ENCODE measurements at regions of chr7 and their contacts with region 1.

Region 1: DNA sequence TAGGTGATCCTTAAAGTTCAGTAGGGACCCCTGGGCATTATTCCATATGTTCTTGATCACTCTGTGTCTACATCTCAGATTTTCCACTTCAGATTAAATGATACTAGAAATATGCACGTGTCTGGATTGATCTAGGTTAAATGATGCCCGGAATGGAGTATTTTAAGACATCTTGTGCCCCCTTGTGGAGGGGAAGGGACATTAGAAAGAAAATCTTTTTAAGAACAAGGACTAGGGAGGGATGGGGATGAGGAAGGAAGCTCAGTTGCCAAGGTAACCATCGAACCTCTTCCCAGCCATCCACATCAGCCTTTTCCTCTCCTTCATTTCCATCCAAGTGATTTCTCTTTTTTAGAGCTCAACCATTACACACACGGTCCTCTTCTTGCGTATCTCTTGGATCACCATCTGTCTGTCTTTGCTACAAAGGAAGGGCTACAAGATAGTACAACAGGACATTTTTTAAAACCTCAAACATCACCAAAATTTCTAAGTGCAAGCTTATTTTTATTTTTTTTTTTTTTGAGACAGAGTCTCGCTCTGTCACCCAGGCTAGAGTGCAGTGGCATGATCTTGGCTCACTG is 40.5 kb downstream of the PRSS2 start:
- DNase-seq: peak; percentile 59
- ATAC-seq: no peak
- H3K4me3 Mint-ChIP-seq: peak overlapping the region; percentile 100
- H3K27ac Mint-ChIP-seq: peak overlapping the region; percentile 97
- H3K4me1 Mint-ChIP-seq: peaks cover 68% of the 10 kb centered on the region
- H3K27me3 Mint-ChIP-seq: no peaks in the 10 kb centered on the region
- CTCF ChIP-seq: peak; percentile 83

Region 2: GRCh38 chr7:142301923-142302550 is 509.2 kb before region 1 on chr7:
- CTCF ChIA-PET with region 1: interaction called, 59 read pairs
- POLR2A ChIA-PET with region 1: interaction called, 4 read pairs
- intact Hi-C with region 1: loop called (anchors 10 kb)
- DNase-seq: no peak
- ATAC-seq: peak; percentile 29
- H3K4me3 Mint-ChIP-seq: no peak overlapping the region
- H3K27ac Mint-ChIP-seq: no peak overlapping the region
- H3K4me1 Mint-ChIP-seq: peaks cover 16% of the 10 kb centered on the region
- H3K27me3 Mint-ChIP-seq: peaks cover 12% of the 10 kb centered on the region
- CTCF ChIP-seq: peak; percentile 72

Region 3: GRCh38 chr7:142516038-142516501 is 295.2 kb before region 1 on chr7:
- CTCF ChIA-PET with region 1: interaction called, 12 read pairs
- POLR2A ChIA-PET with region 1: interaction called, 3 read pairs
- intact Hi-C with region 1: no loop called
- DNase-seq: peak; percentile 49
- ATAC-seq: peak; percentile 80
- H3K4me3 Mint-ChIP-seq: no peak overlapping the region
- H3K27ac Mint-ChIP-seq: peak overlapping the region; percentile 35
- H3K4me1 Mint-ChIP-seq: peaks cover 35% of the 10 kb centered on the region
- H3K27me3 Mint-ChIP-seq: no peaks in the 10 kb centered on the region
- CTCF ChIP-seq: peak; percentile 75

Region 4: GRCh38 chr7:142632291-142633134 is 178.7 kb before region 1 on chr7:
- CTCF ChIA-PET with region 1: interaction called, 31 read pairs
- POLR2A ChIA-PET with region 1: interaction called, 20 read pairs
- intact Hi-C with region 1: no loop called
- DNase-seq: peak; percentile 65
- ATAC-seq: peak; percentile 76
- H3K4me3 Mint-ChIP-seq: no peak overlapping the region
- H3K27ac Mint-ChIP-seq: peak overlapping the region; percentile 7
- H3K4me1 Mint-ChIP-seq: peaks cover 9% of the 10 kb centered on the region
- H3K27me3 Mint-ChIP-seq: peaks cover 8% of the 10 kb centered on the region
- CTCF ChIP-seq: peak; percentile 59

Region 5: DNA sequence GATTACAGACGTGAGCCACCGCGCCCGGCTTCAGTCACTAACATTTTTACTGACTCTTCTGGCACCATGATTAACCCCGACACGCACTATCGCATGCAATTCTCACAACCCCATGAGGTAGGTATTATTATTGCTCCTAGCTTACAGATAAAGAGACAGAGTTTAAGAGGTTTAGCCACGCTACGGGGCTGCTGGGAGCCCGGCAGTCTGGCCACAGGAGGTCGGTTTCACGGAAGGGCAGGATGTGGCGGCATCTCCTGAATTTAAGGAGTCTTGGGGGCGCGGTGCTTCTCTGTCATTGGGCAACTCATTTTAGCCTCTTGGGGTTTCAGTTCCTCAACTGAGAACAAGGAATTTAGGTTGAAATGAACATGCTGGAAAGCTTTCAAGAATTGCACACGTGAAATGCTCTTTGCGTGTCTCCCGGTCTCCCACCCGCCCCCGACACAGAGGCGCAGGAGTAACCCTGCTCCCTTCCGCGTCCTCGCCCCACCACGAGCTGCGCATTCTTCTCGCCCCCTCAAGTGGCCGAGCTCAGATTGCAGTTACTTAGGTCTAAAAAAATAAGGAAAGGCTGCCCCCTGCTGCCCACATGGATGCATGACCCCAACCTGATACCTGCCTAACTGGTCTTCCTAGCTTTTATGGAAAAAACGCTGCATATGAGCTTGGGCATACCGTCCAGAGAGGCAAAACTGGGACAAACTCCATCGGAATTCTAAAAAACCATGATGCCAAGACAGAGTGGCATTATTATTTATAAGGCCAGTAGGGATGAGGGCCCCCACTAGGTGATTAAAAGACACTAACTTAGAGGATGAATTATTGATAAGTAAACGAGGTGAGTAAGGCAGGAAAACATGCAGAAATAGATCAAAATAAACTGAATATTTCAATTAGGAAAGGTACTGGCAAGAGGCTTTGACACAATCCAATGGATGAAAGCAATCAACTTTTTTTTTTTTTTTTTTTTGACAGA is 28.0 kb before region 1 on chr7:
- CTCF ChIA-PET with region 1: interaction called, 117 read pairs
- POLR2A ChIA-PET with region 1: interaction called, 1,391 read pairs
- intact Hi-C with region 1: no loop called
- DNase-seq: peak; percentile 90
- ATAC-seq: peak; percentile 47
- H3K4me3 Mint-ChIP-seq: peak overlapping the region; percentile 66
- H3K27ac Mint-ChIP-seq: peak overlapping the region; percentile 81
- H3K4me1 Mint-ChIP-seq: peaks cover 6% of the 10 kb centered on the region
- H3K27me3 Mint-ChIP-seq: no peaks in the 10 kb centered on the region
- CTCF ChIP-seq: peak; percentile 69

Region 6: DNA sequence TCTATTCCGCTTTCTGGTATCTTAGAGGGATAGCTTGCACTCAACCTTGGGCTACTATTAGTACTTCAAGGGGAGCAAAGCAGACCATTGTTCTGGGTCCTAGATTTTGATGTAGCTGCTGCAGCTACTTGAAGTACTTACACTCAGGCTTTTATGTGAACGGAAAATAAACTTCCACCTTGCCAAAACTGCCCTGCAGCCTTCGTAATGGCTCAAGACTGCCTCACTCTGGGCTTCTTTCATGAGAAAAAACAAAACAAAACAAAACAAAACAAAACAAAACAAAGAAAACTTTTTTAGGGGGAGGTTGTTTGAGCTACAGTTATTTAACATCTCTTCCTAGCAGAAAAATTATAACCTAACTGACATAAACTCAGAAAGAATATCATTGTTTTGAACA is 24.2 kb after region 1 on chr7:
- CTCF ChIA-PET with region 1: interaction called, 16 read pairs
- POLR2A ChIA-PET with region 1: no interaction called
- intact Hi-C with region 1: no loop called
- DNase-seq: peak; percentile 20
- ATAC-seq: no peak
- H3K4me3 Mint-ChIP-seq: no peak overlapping the region
- H3K27ac Mint-ChIP-seq: no peak overlapping the region
- H3K4me1 Mint-ChIP-seq: peaks cover 7% of the 10 kb centered on the region
- H3K27me3 Mint-ChIP-seq: no peaks in the 10 kb centered on the region
- CTCF ChIP-seq: no peak